Ovary (tissue), 10 donors: ENCODE measurements at regions of chr20 and their contacts with region 1.

Region 1: DNA sequence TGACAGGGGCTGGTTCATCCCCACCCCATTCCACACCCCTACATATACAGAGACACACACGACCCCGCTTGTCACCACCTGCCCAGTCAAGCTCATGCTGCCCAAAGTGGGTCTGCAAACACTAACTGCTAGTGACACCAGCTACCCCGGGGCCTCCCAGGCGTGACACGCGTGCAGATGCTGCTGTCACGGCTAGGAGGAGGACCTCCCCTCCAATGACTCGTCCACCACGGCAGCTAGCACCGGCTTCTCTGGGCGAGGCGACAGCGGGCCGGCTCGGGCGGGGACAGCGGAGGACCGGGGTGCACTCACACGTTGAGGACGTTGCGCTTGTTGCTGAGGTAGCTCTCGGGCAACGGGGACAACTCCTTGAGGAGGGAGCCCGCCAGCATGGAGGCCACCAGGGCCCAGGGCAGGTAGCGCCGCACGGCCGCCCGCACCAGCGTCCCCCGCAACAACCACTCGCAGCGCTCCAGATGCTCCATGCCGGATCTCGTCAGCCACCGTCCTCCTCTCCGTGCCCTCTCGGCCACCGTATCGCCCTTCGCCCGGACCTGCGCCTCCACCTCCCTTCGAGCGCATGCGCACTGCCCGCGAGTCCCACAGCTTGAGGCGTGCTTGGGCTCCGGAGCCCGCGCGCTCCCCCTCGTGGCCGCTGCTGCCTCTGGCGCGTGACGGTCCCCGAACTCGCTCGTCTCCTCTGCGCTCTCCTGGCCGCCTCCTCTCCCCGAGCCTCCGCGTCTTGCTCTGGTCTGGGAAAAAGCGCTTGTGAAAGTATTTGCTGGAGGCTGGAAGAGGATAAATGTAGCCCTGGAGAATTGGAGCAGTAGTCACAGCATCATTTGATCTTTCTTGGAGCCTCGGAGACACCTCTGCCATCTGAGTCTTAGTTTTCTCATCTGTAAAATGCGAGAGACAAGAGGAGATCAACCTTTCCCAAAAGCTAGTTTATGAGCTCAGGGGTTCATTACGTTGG is at the start of gene FITM2:
- DNase-seq: peak; percentile 97 to 99 (median 98)
- H3K4me3 ChIP-seq: peak within 1 kb of the TSS; percentile 57
- H3K27ac ChIP-seq: peak within 1 kb of the TSS; percentile 18 to 54
- H3K4me1 ChIP-seq: peaks cover 8% of the 10 kb centered on the region
- H3K27me3 ChIP-seq: no peaks in the 10 kb centered on the region
- CTCF ChIP-seq: peak; percentile 92 to 98 (median 97)
- EP300 ChIP-seq: no peak
- POLR2A ChIP-seq: peak; percentile 24
- total RNA-seq, gene FITM2: 4.4 to 9.3 (median 8.0) TPM

Region 2: DNA sequence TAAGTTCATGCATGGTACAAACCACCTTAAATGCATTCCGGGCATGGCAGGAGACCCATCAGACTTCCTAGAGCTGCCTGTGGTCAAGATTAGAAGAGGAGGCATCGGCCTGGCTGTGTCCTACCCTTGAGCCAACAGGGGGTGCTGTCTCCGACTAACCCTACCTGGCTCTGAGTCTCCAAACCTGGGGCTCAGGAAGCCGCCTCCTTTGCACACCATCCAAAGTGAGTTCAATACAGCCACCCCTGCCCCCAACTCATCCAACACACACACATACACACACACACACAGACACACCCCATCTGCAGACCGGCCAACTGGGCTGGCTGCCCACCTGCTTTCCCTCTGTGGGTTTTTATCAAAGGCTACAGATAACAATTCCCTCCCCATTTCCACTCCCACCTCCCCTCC is 201.0 kb before region 1 on chr20:
- intact Hi-C with region 1: loop called in 1 of 4 experiments (anchors 5 kb)
- DNase-seq: peak in 1 of 5 donors; percentile 51
- H3K4me3 ChIP-seq: no peak overlapping the region
- H3K27ac ChIP-seq: no peak overlapping the region
- H3K4me1 ChIP-seq: no peaks in the 10 kb centered on the region
- H3K27me3 ChIP-seq: no peaks in the 10 kb centered on the region
- CTCF ChIP-seq: no peak
- EP300 ChIP-seq: no peak
- POLR2A ChIP-seq: no peak

Region 3: DNA sequence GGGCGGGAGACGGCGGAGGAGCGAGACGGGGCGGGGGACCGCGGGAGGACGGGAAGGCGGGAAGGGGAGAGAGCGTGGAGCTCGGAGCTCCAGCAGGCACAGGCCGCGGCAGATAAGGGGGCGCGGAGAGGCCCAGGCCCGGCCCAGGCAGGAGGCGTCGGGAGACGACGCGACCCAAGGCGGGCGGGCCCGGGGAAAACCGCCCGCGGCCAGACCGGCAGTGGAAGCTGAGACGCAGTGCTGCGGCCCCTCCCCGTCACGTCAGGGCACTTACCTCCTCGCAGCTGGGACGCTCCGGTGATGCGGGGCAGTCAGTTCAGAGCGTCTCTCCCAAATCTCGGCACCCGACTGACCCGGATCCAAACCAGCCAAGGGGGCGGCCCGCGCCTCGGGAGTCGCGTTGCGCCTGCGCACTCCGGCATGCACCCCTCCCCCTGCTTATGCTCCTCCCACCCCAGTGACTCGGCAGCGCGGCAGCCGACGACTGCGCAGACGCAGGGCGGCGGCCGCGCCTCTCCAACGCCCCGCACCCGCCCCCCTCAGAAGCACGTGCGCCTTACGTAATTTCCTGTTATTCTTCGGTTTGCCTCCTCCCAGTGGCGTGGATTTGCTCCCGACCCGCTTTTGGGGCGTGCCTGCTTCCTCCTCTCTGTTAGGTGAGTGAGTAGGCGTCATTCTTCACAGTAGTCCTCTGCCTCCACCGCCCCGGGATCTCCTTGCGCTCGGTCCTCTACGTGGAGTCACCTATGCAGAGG is 100.4 kb before region 1 on chr20 and contains the start of gene OSER1:
- intact Hi-C with region 1: loop called in 2 of 4 experiments (anchors 5 kb)
- DNase-seq: peak; percentile 96 to 99 (median 98)
- H3K4me3 ChIP-seq: peak within 1 kb of the TSS; percentile 70
- H3K27ac ChIP-seq: peak within 1 kb of the TSS; percentile 86 to 98
- H3K4me1 ChIP-seq: peaks cover 1% of the 10 kb centered on the region
- H3K27me3 ChIP-seq: no peaks in the 10 kb centered on the region
- CTCF ChIP-seq: peak in 1 of 3 donors; percentile 5
- EP300 ChIP-seq: peak; percentile 88
- POLR2A ChIP-seq: peak; percentile 92
- total RNA-seq, gene OSER1: 27.7 to 40.1 (median 37.2) TPM

Region 4: GRCh38 chr20:44217342-44218092 is 93.4 kb before region 1 on chr20:
- intact Hi-C with region 1: loop called (anchors 1 to 5 kb)
- DNase-seq: peak; percentile 49 to 63 (median 59)
- H3K4me3 ChIP-seq: no peak overlapping the region
- H3K27ac ChIP-seq: no peak overlapping the region
- H3K4me1 ChIP-seq: peaks cover 3% of the 10 kb centered on the region
- H3K27me3 ChIP-seq: no peaks in the 10 kb centered on the region
- CTCF ChIP-seq: peak; percentile 34 to 60 (median 43)
- EP300 ChIP-seq: no peak
- POLR2A ChIP-seq: no peak

Region 5: DNA sequence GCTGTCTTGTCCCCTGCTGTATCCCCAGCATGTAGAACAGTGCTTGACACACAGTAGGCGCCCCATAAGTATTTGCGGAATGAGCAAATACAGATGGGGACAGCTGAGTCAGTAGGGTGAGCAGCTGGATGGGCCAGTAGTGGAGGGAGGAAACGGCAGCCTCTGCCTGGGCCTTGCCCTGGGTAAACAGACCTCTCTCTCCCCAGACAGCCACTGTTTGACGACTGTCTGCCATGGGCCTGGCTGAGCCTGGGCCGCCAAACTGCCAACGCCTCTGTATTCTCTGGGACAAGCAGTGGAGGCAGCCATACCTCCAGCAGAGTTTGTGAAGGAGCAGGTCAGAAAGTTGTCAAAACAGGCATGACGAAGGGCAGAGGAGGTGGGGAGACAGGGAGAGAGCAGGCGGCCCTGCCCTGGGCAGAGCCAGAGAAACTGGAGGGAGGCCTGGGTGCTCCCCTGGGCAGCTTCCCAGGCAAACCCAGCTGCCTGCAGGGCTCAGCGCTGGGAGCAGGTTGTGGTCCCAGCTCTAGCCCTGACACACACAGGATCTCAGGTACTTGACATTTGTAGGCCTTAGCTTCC is 59.8 kb after region 1 on chr20:
- intact Hi-C with region 1: no loop called
- DNase-seq: no peak
- H3K4me3 ChIP-seq: no peak overlapping the region
- H3K27ac ChIP-seq: no peak overlapping the region
- H3K4me1 ChIP-seq: no peaks in the 10 kb centered on the region
- H3K27me3 ChIP-seq: no peaks in the 10 kb centered on the region
- CTCF ChIP-seq: no peak
- EP300 ChIP-seq: no peak
- POLR2A ChIP-seq: no peak